AG04449 (cell line): ENCODE measurements at regions of chr11 and their contacts with region 1.

Region 1: GRCh38 chr11:32297611-32298011 is 137.7 kb downstream of the WT1 start:
- DNase-seq: no peak
- H3K4me3 ChIP-seq: no peak overlapping the region
- CTCF ChIP-seq: no peak

Region 2: GRCh38 chr11:31107062-31107461 is 1190.5 kb before region 1 on chr11:
- CTCF ChIA-PET with region 1: interaction called, 14 read pairs
- POLR2A ChIA-PET with region 1: no interaction called
- DNase-seq: no peak
- H3K4me3 ChIP-seq: no peak overlapping the region
- CTCF ChIP-seq: peak; percentile 54

Region 3: DNA sequence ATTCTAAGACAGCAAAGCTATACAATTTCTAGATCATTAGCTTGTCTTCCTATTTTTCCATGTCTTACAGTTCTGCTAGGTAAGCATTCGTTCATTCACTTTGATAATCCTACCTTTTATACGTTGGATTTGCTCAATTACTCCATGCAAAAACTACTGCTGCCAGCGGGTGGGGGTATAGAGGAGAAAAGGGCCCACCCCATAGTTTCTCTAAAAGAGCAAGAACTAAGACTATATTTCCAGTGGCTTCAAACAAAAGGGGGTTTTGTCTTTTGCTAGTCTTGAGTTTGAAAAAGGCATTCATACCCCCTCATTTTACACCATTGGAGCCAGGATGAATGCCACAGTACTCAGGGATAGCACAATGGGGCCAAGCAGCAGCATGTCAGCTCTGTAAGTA is 17.9 kb before region 1 on chr11:
- CTCF ChIA-PET with region 1: interaction called, 10 read pairs
- POLR2A ChIA-PET with region 1: no interaction called
- DNase-seq: no peak
- H3K4me3 ChIP-seq: no peak overlapping the region
- CTCF ChIP-seq: no peak

Region 4: DNA sequence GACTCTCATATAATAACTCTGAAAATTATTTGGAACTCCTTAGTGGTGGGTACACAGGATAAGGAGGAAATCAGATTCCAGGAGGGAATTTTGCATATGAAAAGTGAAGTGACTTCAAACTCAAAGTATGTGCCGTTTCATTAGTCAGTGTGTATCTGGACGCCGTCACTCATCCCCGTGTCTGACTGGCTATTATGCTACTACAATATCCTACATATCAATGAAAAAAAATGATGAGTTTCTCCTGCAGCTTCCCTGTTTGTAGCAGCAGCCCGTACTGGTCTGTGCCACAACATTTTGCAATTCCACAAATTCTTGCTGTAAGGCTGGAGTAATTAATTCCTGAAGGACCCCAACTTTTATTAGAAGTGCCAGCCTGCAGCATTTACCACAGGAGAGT is 121.2 kb after region 1 on chr11:
- CTCF ChIA-PET with region 1: no interaction called
- POLR2A ChIA-PET with region 1: no interaction called
- DNase-seq: no peak
- H3K4me3 ChIP-seq: no peak overlapping the region
- CTCF ChIP-seq: no peak